Activated naive CD8-positive, alpha-beta T cell treated with anti-CD3 and anti-CD28 coated beads, Interleukin-2, amount 10 ng/mL, durations not matched to agents 7 days and 5 days (primary cell): ENCODE measurements at regions of chr3 and their contacts with region 1.

Region 1: GRCh38 chr3:136752422-136753325 is 496 bp upstream of the STAG1 start:
- DNase-seq: peak; percentile 99
- ATAC-seq: peak; percentile 88
- H3K4me3 Mint-ChIP-seq: peak overlapping the region; percentile 92
- H3K27ac Mint-ChIP-seq: peak overlapping the region; percentile 97
- H3K4me1 Mint-ChIP-seq: peaks cover 35% of the 10 kb centered on the region
- H3K27me3 Mint-ChIP-seq: no peaks in the 10 kb centered on the region

Region 2: GRCh38 chr3:136196401-136197158 is 556.1 kb before region 1 on chr3:
- POLR2A ChIA-PET with region 1: interaction called, 76 read pairs
- DNase-seq: peak; percentile 97
- ATAC-seq: peak; percentile 82
- H3K4me3 Mint-ChIP-seq: peak overlapping the region; percentile 92
- H3K27ac Mint-ChIP-seq: peak overlapping the region; percentile 96
- H3K4me1 Mint-ChIP-seq: peaks cover 19% of the 10 kb centered on the region
- H3K27me3 Mint-ChIP-seq: no peaks in the 10 kb centered on the region

Region 3: GRCh38 chr3:136396916-136397315 is 355.8 kb before region 1 on chr3:
- POLR2A ChIA-PET with region 1: interaction called, 20 read pairs
- DNase-seq: no peak
- ATAC-seq: no peak
- H3K4me3 Mint-ChIP-seq: no peak overlapping the region
- H3K27ac Mint-ChIP-seq: no peak overlapping the region
- H3K4me1 Mint-ChIP-seq: no peaks in the 10 kb centered on the region
- H3K27me3 Mint-ChIP-seq: no peaks in the 10 kb centered on the region

Region 4: DNA sequence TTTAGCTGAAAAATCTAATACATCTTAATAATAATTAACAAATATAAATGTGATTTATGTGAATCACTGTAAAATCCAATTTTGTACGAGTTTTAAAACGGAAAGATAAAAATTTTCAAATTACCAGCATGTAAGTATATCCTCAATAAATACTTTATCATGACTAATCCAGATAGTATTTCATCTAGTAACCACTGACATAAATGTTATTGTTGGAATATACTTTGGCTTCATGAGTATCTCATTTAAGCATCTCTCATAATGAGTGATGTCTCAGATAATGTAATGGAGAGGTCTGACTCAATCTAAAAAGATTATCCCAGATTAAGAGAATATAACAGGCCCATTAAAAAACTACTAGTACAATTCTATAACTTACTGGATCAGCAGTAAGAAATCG is 216.8 kb before region 1 on chr3:
- POLR2A ChIA-PET with region 1: no interaction called
- DNase-seq: no peak
- ATAC-seq: no peak
- H3K4me3 Mint-ChIP-seq: no peak overlapping the region
- H3K27ac Mint-ChIP-seq: no peak overlapping the region
- H3K4me1 Mint-ChIP-seq: no peaks in the 10 kb centered on the region
- H3K27me3 Mint-ChIP-seq: no peaks in the 10 kb centered on the region

Region 5: GRCh38 chr3:136698361-136698760 is 54.3 kb before region 1 on chr3:
- POLR2A ChIA-PET with region 1: no interaction called
- DNase-seq: no peak
- ATAC-seq: no peak
- H3K4me3 Mint-ChIP-seq: no peak overlapping the region
- H3K27ac Mint-ChIP-seq: no peak overlapping the region
- H3K4me1 Mint-ChIP-seq: peaks cover 15% of the 10 kb centered on the region
- H3K27me3 Mint-ChIP-seq: no peaks in the 10 kb centered on the region

Region 6: DNA sequence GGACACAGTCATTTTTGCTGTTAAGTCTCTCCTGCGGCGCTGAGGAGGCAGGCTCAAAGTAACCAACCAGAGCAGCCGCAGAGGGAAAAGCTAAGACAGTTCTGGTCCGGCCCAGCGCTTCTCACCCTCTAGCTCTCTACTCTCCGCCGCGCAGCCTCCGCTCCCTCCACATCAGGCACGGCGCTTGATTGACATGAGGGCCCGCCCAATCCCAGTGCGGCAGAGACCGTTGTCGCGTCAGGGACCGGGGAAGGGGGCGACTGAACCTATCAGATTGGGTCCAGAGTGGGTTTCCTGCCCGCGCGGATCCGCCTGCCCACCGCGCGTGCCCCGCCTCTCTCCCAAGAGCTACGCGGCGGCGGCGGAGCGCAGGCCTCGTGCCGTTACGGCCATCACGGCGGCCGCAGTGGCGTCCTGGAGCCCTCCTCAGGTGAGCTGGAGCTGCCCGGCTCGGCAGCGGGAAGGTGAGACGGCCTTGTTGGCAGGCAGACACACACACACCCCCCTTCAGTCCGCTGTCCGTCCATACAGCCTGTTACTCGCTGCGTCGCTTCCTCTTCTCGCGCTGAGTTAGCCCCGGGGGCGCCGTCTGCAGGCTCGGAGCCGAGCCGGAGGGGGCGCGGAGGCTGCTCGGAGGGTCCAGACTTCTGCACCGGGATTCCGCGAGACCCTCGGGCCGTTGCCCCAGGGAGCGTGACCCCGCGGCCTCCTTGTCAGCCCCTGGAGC is 109.4 kb after region 1 on chr3 and contains the start of gene NCK1:
- POLR2A ChIA-PET with region 1: interaction called, 61 read pairs
- DNase-seq: peak; percentile 94
- ATAC-seq: peak; percentile 98
- H3K4me3 Mint-ChIP-seq: peak within 1 kb of the TSS; percentile 97
- H3K27ac Mint-ChIP-seq: peak within 1 kb of the TSS; percentile 97
- H3K4me1 Mint-ChIP-seq: peaks cover 39% of the 10 kb centered on the region
- H3K27me3 Mint-ChIP-seq: no peaks in the 10 kb centered on the region
- total RNA-seq, gene NCK1: 37.2 to 42.2 TPM

Region 7: GRCh38 chr3:137013955-137014688 is 261.4 kb after region 1 on chr3:
- POLR2A ChIA-PET with region 1: interaction called, 32 read pairs
- DNase-seq: peak; percentile 83
- ATAC-seq: peak; percentile 85
- H3K4me3 Mint-ChIP-seq: peak overlapping the region; percentile 77
- H3K27ac Mint-ChIP-seq: no peak overlapping the region
- H3K4me1 Mint-ChIP-seq: peaks cover 7% of the 10 kb centered on the region
- H3K27me3 Mint-ChIP-seq: no peaks in the 10 kb centered on the region